Head of caudate nucleus (tissue), 42 donors: ENCODE measurements at regions of chr9 and their contacts with region 1.

Region 1: GRCh38 chr9:123414946-123415821 is 59.2 kb downstream of the CRB2 start:
- DNase-seq: no peak

Region 2: GRCh38 chr9:123472862-123473614 is 57.9 kb after region 1 on chr9:
- intact Hi-C with region 1: loop called (anchors 10 kb)
- DNase-seq: peak in 26 of 42 donors; percentile 14 to 61 (median 37)

Region 3: GRCh38 chr9:123589361-123590239 is 174.4 kb after region 1 on chr9:
- intact Hi-C with region 1: no loop called
- DNase-seq: peak in 2 of 42 donors; percentile 10 to 13